Natural killer cell (primary cell): ENCODE measurements at regions of chr4 and their contacts with region 1.

Region 1: DNA sequence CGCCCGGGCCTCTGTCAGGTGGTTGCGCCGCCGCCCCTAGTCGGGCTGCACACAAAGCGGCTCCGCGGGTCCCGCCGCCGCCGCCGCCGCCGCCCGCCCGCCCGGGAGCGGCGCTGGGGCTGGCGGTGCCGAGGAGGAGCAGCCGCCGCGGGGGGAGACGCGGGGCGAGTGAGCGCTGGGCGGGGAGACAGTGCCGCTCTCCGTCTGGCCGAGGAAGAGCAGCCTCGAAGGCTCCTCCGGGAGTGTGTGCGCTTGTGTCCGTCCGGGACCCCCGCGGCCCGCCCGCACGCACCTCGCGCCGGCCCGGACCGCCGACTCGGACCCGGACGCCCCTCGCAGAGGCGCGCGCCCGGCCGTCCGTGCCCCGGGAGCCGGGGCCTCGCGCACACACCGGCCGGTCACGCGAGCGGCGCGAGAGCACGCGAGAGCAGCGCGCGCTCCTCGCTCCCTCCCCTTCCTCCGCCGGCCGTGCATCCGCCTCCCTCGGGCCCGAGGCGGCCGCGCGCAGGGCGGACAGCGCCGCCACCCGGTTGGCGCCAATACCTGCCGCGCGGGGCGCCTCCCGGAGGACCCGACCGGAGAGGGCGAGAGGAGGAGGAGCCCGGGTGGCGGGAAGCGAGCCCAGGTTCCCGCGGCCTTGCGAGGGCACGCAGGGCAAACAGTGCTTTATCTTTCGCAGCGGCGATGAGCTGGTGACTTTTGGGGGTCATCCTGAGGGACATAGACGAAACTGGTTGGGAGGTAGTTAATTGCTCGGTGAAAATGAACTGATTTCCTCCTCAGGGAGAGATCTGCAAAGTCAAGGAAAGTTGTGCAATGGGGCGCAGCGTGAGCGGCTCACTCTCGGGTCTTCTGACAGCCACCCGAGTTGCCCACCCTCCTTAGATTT is at the start of gene PDS5A:
- DNase-seq: peak; percentile 86 to 96
- ATAC-seq: peak; percentile 85 to 96 (median 88)
- H3K4me3 ChIP-seq: peak within 1 kb of the TSS; percentile 70
- H3K4me3 Mint-ChIP-seq: peak within 1 kb of the TSS; percentile 90
- H3K27ac ChIP-seq: peak within 1 kb of the TSS; percentile 75
- H3K27ac Mint-ChIP-seq: peak within 1 kb of the TSS; percentile 86 to 88
- H3K4me1 ChIP-seq: peaks cover 13% of the 10 kb centered on the region
- H3K4me1 Mint-ChIP-seq: peaks cover 27 to 31% of the 10 kb centered on the region in 2 donors
- H3K27me3 ChIP-seq: no peaks in the 10 kb centered on the region
- H3K27me3 Mint-ChIP-seq: no peaks in the 10 kb centered on the region
- CTCF ChIP-seq: peak; percentile 80
- total RNA-seq, gene PDS5A: 80.1 to 99.9 (median 99.8) TPM

Region 2: GRCh38 chr4:39527273-39528060 is 450.3 kb before region 1 on chr4 and contains the start of gene UGDH:
- intact Hi-C with region 1: loop called (anchors 1 kb)
- DNase-seq: peak; percentile 91 to 95
- ATAC-seq: peak; percentile 98 to 100 (median 99)
- H3K4me3 ChIP-seq: peak within 1 kb of the TSS; percentile 93
- H3K4me3 Mint-ChIP-seq: peak within 1 kb of the TSS; percentile 96
- H3K27ac ChIP-seq: peak within 1 kb of the TSS; percentile 68
- H3K27ac Mint-ChIP-seq: peak within 1 kb of the TSS; percentile 78 to 92
- H3K4me1 ChIP-seq: peaks cover 18% of the 10 kb centered on the region
- H3K4me1 Mint-ChIP-seq: peaks cover 13 to 20% of the 10 kb centered on the region in 2 donors
- H3K27me3 ChIP-seq: no peaks in the 10 kb centered on the region
- H3K27me3 Mint-ChIP-seq: no peaks in the 10 kb centered on the region
- CTCF ChIP-seq: no peak
- total RNA-seq, gene UGDH: 12.2 to 14.8 (median 13.6) TPM

Region 3: GRCh38 chr4:39697740-39698423 is 279.9 kb before region 1 on chr4 and contains the start of gene UBE2K:
- intact Hi-C with region 1: loop called (anchors 1 kb)
- DNase-seq: peak; percentile 89 to 95
- ATAC-seq: peak; percentile 78 to 93 (median 88)
- H3K4me3 ChIP-seq: peak within 1 kb of the TSS; percentile 100
- H3K4me3 Mint-ChIP-seq: peak within 1 kb of the TSS; percentile 98
- H3K27ac ChIP-seq: peak within 1 kb of the TSS; percentile 91
- H3K27ac Mint-ChIP-seq: peak within 1 kb of the TSS; percentile 91 to 99
- H3K4me1 ChIP-seq: peaks cover 17% of the 10 kb centered on the region
- H3K4me1 Mint-ChIP-seq: peaks cover 36 to 45% of the 10 kb centered on the region in 2 donors
- H3K27me3 ChIP-seq: no peaks in the 10 kb centered on the region
- H3K27me3 Mint-ChIP-seq: no peaks in the 10 kb centered on the region
- CTCF ChIP-seq: no peak
- total RNA-seq, gene UBE2K: 38.0 to 53.9 (median 43.6) TPM

Region 4: GRCh38 chr4:39883646-39884045 is 94.1 kb before region 1 on chr4:
- intact Hi-C with region 1: no loop called
- DNase-seq: no peak
- ATAC-seq: no peak
- H3K4me3 ChIP-seq: no peak overlapping the region
- H3K4me3 Mint-ChIP-seq: no peak overlapping the region
- H3K27ac ChIP-seq: no peak overlapping the region
- H3K27ac Mint-ChIP-seq: peak overlapping the region in 1 of 2 donors; percentile 33
- H3K4me1 ChIP-seq: no peaks in the 10 kb centered on the region
- H3K4me1 Mint-ChIP-seq: peaks cover 0 to 10% of the 10 kb centered on the region in 2 donors
- H3K27me3 ChIP-seq: no peaks in the 10 kb centered on the region
- H3K27me3 Mint-ChIP-seq: no peaks in the 10 kb centered on the region
- CTCF ChIP-seq: no peak

Region 5: GRCh38 chr4:39908284-39908683 is 69.4 kb before region 1 on chr4:
- intact Hi-C with region 1: loop called (anchors 10 kb)
- DNase-seq: no peak
- ATAC-seq: no peak
- H3K4me3 ChIP-seq: no peak overlapping the region
- H3K4me3 Mint-ChIP-seq: no peak overlapping the region
- H3K27ac ChIP-seq: no peak overlapping the region
- H3K27ac Mint-ChIP-seq: no peak overlapping the region
- H3K4me1 ChIP-seq: no peaks in the 10 kb centered on the region
- H3K4me1 Mint-ChIP-seq: no peaks in the 10 kb centered on the region
- H3K27me3 ChIP-seq: no peaks in the 10 kb centered on the region
- H3K27me3 Mint-ChIP-seq: no peaks in the 10 kb centered on the region
- CTCF ChIP-seq: no peak

Region 6: DNA sequence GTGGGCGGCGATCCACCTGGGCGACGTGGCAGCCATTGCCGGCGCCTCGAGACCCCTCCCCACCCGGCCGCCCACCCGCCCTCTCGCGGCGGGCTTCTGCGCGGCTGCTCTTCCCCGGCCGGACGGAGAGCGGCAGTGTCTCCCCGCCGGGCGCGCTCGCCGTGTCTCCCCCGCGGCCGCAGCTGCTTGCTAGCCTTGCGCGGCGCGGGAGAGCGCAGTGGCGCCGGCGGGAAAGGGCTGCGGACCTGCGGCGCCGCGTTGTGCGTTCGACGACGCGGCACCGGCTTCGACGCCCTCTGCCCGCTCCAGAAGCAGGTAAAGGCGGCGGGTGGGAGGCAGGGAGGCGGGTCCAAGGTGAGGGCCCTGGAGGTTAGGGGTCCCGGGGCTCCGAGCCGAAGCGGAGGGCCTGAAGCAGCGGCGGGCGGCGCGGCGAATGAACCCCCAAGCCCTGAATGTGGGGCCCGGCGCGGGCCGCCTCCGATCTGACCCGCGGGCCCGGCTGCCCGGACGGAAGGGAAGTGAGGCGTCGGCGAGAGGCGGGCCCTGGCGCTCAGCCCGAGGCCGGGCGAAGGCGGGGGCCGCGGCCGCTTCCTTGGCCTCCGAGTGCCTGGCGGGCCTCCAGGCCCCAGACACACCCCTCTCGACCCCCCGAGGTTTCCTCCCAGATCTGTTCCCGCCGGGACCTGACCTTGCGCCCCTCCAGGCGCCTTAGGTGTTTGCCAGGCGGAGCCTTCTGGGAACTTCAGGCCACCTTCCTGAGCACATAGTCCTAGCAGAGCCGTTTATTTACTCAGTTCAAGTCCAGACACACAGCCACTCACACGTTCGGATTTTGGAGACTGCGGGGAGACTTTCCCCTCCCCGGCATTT is 79.2 kb after region 1 on chr4 and contains the start of gene N4BP2:
- intact Hi-C with region 1: loop called (anchors 5 kb)
- DNase-seq: peak; percentile 63 to 89
- ATAC-seq: peak; percentile 65 to 81 (median 76)
- H3K4me3 ChIP-seq: peak within 1 kb of the TSS; percentile 65
- H3K4me3 Mint-ChIP-seq: peak within 1 kb of the TSS; percentile 95
- H3K27ac ChIP-seq: peak within 1 kb of the TSS; percentile 91
- H3K27ac Mint-ChIP-seq: peak within 1 kb of the TSS; percentile 91 to 95
- H3K4me1 ChIP-seq: peaks cover 18% of the 10 kb centered on the region
- H3K4me1 Mint-ChIP-seq: peaks cover 26 to 39% of the 10 kb centered on the region in 2 donors
- H3K27me3 ChIP-seq: no peaks in the 10 kb centered on the region
- H3K27me3 Mint-ChIP-seq: no peaks in the 10 kb centered on the region
- CTCF ChIP-seq: peak; percentile 74
- total RNA-seq, gene N4BP2: 16.4 to 22.4 (median 17.5) TPM